WTC11 (cell line): ENCODE measurements at regions of chr17 and their contacts with region 1.

Region 1: GRCh38 chr17:42101513-42102319 is 3.4 kb upstream of the ZNF385C start:
- DNase-seq: peak; percentile 97
- ATAC-seq: peak; percentile 84
- H3K4me3 Mint-ChIP-seq: no peak overlapping the region
- H3K27ac Mint-ChIP-seq: no peak overlapping the region
- H3K4me1 Mint-ChIP-seq: peaks cover 19% of the 10 kb centered on the region
- H3K27me3 Mint-ChIP-seq: peaks cover 25% of the 10 kb centered on the region
- CTCF ChIP-seq: peak; percentile 98

Region 2: DNA sequence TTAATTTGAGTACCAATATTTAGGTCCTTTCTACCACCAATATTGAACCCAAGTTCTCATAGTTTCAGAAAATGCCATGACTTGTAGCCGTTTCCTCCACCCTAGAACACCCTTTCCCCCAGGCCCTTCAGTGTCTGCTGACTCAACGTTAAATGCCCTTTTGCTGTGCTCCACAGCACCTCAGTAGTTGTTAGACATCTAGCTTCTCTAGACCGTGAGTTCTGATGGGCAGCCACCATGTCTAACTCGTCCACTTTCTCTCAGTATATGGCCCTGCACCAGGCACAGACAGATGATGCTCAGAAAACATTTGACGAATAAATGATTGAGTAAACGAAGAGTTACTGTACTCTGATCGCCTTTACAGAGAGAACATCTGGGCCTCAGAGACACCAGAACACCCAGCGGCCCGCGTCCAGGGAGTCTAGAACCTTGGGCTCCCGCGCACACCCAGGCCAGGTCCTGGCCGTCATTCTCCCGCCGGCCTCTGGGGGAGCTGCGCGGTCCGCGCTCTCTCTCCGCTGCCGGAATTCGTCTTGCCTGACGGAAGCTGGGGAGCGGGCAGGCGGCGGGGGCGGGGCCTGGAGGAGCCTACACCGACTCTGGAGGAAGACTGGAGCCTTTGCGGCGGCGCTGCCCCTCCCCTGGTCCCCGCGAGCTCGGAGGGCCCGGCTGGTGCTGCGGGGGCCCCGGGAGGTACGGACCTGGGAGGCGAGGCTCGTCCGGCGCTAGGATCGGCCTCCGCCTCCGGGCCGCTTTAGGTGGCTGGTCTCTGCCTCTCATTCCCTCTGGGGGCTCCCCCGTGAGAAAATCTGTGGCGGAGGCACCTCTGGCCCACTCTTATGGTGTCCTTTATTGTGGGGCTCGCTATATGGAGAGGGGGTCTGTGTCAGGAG is 82.0 kb before region 1 on chr17 and contains the start of gene NKIRAS2:
- CTCF ChIA-PET with region 1: interaction called, 138 read pairs
- POLR2A ChIA-PET with region 1: interaction called, 3 read pairs
- DNase-seq: peak; percentile 97
- ATAC-seq: peak; percentile 72
- H3K4me3 Mint-ChIP-seq: peak within 1 kb of the TSS; percentile 95
- H3K27ac Mint-ChIP-seq: peak within 1 kb of the TSS; percentile 89
- H3K4me1 Mint-ChIP-seq: peaks cover 40% of the 10 kb centered on the region
- H3K27me3 Mint-ChIP-seq: no peaks in the 10 kb centered on the region
- CTCF ChIP-seq: peak; percentile 80
- total RNA-seq, gene NKIRAS2: 31.9 to 37.3 TPM (median 36.1 TPM) in 3 replicates

Region 3: DNA sequence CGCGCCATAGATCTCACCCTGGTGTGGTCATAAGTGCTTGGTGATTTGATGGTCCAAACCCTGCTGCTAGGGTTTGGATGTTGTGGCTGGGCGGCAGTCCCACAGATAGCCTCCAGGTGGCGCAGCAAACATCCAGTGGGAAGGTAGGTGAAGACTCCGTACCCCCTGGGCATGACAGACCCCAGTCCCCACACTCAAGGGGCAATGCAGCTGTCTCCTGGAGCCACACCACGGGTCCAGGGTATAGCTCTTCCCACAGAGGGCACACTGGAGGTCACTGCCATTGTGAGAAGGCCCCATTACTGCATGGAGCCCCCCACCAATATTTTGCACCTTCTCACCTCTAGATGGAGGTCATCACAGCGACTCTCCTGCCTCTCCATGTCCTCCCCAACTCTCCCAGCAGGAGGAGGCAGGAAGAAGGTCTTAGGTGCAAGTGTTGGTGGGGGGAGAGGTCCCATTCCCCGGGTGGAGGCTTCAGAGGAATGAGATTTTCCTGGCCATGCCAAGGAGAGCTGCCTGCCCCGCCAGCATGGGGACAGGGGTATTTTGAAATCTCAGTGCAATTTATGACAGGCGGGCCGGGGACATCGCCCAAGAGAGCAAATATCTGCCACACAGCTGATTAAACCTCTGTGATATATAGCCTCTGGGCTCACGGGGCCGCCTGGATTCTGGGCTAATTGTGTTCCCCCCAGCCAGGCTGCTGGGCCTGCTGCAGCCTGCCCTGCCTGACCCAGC is 34.2 kb before region 1 on chr17:
- CTCF ChIA-PET with region 1: interaction called, 49 read pairs
- POLR2A ChIA-PET with region 1: no interaction called
- DNase-seq: peak; percentile 92
- ATAC-seq: peak; percentile 76
- H3K4me3 Mint-ChIP-seq: no peak overlapping the region
- H3K27ac Mint-ChIP-seq: no peak overlapping the region
- H3K4me1 Mint-ChIP-seq: peaks cover 20% of the 10 kb centered on the region
- H3K27me3 Mint-ChIP-seq: peaks cover 3% of the 10 kb centered on the region
- CTCF ChIP-seq: peak; percentile 97

Region 4: DNA sequence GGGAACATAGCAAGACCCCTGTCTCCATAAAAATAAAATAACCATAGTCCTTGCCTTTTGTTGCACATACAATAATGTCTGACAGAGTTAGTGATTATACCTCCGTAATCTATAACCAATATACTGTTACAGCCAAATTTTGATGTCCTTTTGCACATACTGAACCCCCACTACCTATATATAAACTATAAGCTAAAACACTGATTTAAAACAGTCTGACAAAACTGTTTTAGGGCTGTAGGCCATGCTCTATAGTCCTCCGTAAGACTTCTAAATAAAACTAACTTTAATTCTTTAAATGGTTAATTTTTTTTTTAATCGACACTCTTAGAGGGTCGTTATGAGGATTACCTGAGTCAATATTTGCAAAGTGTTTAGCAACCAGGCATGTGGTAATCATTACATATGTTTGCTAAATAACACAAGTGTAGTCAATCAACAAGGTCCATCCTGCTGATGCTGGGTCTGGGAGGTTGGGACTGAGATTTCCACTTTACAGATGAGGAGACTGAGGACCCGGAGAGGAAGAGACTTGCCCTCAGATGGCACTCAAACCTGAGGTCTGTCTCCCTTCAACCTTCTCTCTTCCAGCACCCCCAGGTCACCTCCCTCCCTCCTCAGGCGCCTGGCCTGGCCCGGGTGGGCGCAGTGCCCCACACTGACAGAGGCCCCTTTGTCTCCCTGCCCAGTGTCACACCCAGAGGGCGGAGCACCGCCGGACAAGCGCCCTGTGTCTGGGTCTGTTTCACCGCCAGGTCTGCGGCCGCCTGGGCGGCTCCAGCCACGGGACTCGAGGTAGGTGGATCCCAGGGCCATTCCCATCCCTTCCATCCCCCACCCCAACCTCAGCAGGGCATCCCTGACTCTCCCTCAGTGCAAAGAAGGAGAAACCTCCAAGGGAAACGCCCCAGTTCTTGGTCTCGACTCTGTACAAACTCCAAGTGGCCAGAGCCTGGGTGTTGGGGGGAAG is 13.7 kb before region 1 on chr17:
- CTCF ChIA-PET with region 1: interaction called, 20 read pairs
- POLR2A ChIA-PET with region 1: no interaction called
- DNase-seq: no peak
- ATAC-seq: peak; percentile 30
- H3K4me3 Mint-ChIP-seq: no peak overlapping the region
- H3K27ac Mint-ChIP-seq: no peak overlapping the region
- H3K4me1 Mint-ChIP-seq: peaks cover 15% of the 10 kb centered on the region
- H3K27me3 Mint-ChIP-seq: no peaks in the 10 kb centered on the region
- CTCF ChIP-seq: no peak

Region 5: DNA sequence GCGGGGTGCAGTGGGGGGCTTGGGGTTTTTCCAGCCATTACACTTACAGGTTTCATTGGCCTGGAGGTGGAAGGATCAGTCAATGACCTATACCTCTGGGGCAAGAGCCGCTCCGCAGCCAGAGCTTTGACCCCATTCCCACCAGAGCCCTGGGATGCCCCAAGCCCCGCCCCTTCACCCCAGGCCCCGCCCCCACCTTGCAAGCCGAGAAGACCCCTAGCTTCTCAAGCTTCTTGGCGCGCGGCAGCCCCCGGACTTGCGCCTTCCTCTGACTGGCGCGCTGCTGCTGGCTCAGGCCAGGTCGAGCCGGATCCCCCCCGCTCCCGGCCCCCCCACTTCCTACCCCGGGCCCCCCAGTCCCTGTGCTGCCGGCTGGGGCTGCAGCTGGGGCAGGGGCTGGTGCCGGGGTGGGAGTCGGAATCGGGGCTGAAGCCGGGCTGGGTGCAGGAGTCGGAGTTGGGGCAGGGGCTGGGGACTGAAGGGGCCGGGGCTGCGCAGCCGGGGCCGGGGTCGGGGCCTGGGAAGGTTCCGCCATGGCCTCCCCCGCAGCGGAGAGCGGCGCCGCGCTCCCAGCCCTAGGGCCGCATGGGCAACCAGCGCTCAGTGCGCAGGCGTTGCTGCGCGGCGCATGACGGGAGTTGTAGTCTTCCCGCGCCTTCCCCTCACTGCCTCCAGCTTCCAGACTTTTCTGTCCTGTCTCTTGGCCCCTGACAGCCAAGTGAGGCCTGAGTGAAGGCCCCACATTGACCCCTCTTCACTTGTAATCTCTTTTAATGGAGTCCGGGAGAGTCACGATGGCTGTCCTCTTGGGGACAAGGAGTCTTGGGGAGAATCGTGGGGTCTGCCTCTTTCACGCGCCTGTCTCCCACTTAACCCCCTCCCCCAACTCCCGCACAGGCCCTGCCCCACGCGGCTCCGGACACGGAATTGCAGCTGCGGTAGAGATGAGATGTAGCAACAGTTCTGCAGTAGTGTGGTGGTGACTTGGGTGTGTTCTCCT is 19.4 kb after region 1 on chr17 and contains the start of gene KAT2A:
- CTCF ChIA-PET with region 1: interaction called, 19 read pairs
- POLR2A ChIA-PET with region 1: no interaction called
- DNase-seq: peak; percentile 85
- ATAC-seq: peak; percentile 73
- H3K4me3 Mint-ChIP-seq: peak within 1 kb of the TSS; percentile 69
- H3K27ac Mint-ChIP-seq: 0 out of 2 replicates have a peak within 1 kb of the TSS, but pooled peaks have one; percentile 19
- H3K4me1 Mint-ChIP-seq: peaks cover 31% of the 10 kb centered on the region
- H3K27me3 Mint-ChIP-seq: no peaks in the 10 kb centered on the region
- CTCF ChIP-seq: no peak
- total RNA-seq, gene KAT2A: 44.8 to 54.0 TPM (median 52.7 TPM) in 3 replicates

Region 6: GRCh38 chr17:42188749-42189650 is 87.3 kb after region 1 on chr17:
- CTCF ChIA-PET with region 1: no interaction called
- POLR2A ChIA-PET with region 1: no interaction called
- DNase-seq: no peak
- ATAC-seq: no peak
- H3K4me3 Mint-ChIP-seq: no peak overlapping the region
- H3K27ac Mint-ChIP-seq: no peak overlapping the region
- H3K4me1 Mint-ChIP-seq: peaks cover 22% of the 10 kb centered on the region
- H3K27me3 Mint-ChIP-seq: peaks cover 29% of the 10 kb centered on the region
- CTCF ChIP-seq: no peak